ENCODE measurements at regions of chr17 and their contacts with region 1.

Region 1: GRCh38 chr17:41665566-41666236 is 23.0 kb upstream of the EIF1 start:
- DNase-seq: peak; percentile 93
- H3K4me3 ChIP-seq: peak overlapping the region; percentile 53 to 65 (median 58)
- H3K27ac ChIP-seq: peak overlapping the region; percentile 81 to 91 (median 86)
- H3K4me1 ChIP-seq: peaks cover 21 to 37% (median 27%) of the 10 kb centered on the region in 4 donors
- H3K27me3 ChIP-seq: no peaks in the 10 kb centered on the region
- CTCF ChIP-seq: peak; percentile 94 to 99 (median 95)
- EP300 ChIP-seq: no peak
- POLR2A ChIP-seq: no peak

Region 2: DNA sequence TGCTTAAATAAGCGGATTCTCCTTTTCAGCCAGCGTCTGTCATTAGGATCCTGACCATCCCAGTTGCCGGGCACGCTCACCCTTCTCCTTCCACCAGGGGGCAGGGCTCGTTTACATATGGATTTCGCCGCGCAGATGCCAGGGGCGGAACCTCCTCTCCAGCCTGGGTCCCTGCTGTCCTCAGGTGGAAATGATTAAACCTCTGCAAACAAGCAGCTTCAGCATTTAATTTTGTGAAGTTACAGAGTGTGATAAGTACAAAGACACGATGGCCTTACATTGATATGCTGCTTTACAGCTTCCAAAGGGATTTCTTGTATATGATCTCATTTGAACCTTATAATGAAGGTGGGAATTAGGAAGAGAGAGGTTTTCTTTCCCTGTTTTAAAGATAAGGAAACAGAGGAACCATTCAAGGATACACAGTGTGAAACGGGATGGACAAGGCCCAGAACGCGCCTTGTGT is 862.1 kb before region 1 on chr17:
- intact Hi-C with region 1: loop called (anchors 5 kb)
- DNase-seq: no peak
- H3K4me3 ChIP-seq: no peak overlapping the region
- H3K27ac ChIP-seq: no peak overlapping the region
- H3K4me1 ChIP-seq: no peaks in the 10 kb centered on the region
- H3K27me3 ChIP-seq: peaks cover 0 to 54% (median 0%) of the 10 kb centered on the region in 4 donors
- CTCF ChIP-seq: peak; percentile 84 to 85 (median 84)
- EP300 ChIP-seq: no peak
- POLR2A ChIP-seq: no peak

Region 3: DNA sequence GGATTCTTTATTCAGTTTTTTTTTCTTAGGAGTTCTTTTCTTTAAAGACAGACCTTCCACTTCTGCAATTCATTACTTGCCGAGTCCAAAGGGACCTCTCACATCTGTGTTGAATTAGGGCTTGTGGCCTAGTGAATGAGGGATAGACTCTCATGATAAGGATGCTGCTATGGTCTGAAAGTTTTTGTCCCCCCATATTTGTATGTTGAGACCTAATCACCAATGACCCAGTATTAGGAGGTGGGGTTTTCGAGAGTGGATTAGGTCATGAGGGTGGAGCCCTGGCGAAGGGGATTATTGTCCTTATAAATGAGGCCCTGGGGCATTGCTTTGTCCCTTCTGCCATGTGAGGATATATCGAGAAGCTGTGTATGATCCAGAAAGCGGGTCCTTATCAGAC is 808.2 kb before region 1 on chr17:
- intact Hi-C with region 1: loop called (anchors 5 kb)
- DNase-seq: no peak
- H3K4me3 ChIP-seq: no peak overlapping the region
- H3K27ac ChIP-seq: no peak overlapping the region
- H3K4me1 ChIP-seq: peaks cover 0 to 18% (median 3%) of the 10 kb centered on the region in 4 donors
- H3K27me3 ChIP-seq: peaks cover 0 to under 1% (median 0%) of the 10 kb centered on the region in 4 donors
- CTCF ChIP-seq: no peak
- EP300 ChIP-seq: no peak
- POLR2A ChIP-seq: no peak

Region 4: GRCh38 chr17:40909351-40909750 is 756.4 kb before region 1 on chr17:
- intact Hi-C with region 1: loop called (anchors 5 kb)
- DNase-seq: no peak
- H3K4me3 ChIP-seq: no peak overlapping the region
- H3K27ac ChIP-seq: peak overlapping the region; percentile 55 to 75 (median 62)
- H3K4me1 ChIP-seq: peaks cover 0 to 25% (median 21%) of the 10 kb centered on the region in 4 donors
- H3K27me3 ChIP-seq: peaks cover 0 to 12% (median 0%) of the 10 kb centered on the region in 4 donors
- CTCF ChIP-seq: peak; percentile 76 to 84 (median 81)
- EP300 ChIP-seq: no peak
- POLR2A ChIP-seq: no peak

Region 5: GRCh38 chr17:41153856-41154255 is 511.8 kb before region 1 on chr17:
- intact Hi-C with region 1: no loop called
- DNase-seq: no peak
- H3K4me3 ChIP-seq: no peak overlapping the region
- H3K27ac ChIP-seq: no peak overlapping the region
- H3K4me1 ChIP-seq: no peaks in the 10 kb centered on the region
- H3K27me3 ChIP-seq: peaks cover 0 to 19% (median 0%) of the 10 kb centered on the region in 4 donors
- CTCF ChIP-seq: no peak
- EP300 ChIP-seq: no peak
- POLR2A ChIP-seq: no peak

Region 6: DNA sequence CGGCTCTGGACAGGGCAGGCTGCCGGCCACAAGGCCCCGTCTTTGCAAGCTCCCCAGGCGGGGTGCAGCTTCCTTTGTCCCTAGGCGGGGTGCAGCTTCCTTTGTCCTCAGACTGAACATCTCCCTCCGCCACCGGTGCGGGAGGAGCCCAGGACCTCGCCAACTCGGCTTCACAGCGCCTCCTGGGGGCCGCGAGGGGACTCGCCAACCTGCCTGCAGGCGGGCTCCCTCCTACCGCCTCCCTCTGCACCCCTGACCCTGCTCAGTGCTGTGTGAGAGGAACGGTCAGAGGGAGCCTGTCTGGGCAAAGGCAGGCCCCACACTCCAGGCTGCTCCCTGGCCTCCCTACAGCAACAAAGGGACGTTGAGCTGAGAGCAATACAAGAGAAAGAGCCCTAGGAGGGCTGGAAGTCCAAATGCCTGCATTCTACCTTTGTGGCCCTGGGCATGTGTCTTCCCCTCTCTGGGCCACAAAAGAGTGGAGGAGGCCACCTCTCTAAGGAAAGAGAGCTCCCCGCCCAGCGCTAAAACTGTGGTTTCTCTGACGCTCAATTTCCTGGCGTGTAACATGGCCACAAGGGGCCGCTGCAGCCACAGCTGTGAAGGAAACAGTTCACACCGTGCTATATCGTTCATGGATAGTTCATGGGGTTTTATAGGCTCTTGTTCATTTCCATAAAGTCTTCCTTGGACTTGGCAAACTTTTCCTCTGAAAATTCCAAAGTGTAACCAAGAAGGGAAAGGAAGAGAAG is 116.7 kb before region 1 on chr17:
- intact Hi-C with region 1: loop called (anchors 5 kb)
- DNase-seq: peak; percentile 93
- H3K4me3 ChIP-seq: peak overlapping the region; percentile 26 to 44 (median 36)
- H3K27ac ChIP-seq: peak overlapping the region in 2 of 4 donors; percentile 17 to 46
- H3K4me1 ChIP-seq: peaks cover 17 to 26% (median 20%) of the 10 kb centered on the region in 4 donors
- H3K27me3 ChIP-seq: no peaks in the 10 kb centered on the region
- CTCF ChIP-seq: peak; percentile 69 to 81 (median 73)
- EP300 ChIP-seq: no peak
- POLR2A ChIP-seq: no peak

Measured in esophagus muscularis mucosa (tissue), 4 donors.